ENCODE measurements at regions of chr5 and their contacts with region 1.

Region 1: DNA sequence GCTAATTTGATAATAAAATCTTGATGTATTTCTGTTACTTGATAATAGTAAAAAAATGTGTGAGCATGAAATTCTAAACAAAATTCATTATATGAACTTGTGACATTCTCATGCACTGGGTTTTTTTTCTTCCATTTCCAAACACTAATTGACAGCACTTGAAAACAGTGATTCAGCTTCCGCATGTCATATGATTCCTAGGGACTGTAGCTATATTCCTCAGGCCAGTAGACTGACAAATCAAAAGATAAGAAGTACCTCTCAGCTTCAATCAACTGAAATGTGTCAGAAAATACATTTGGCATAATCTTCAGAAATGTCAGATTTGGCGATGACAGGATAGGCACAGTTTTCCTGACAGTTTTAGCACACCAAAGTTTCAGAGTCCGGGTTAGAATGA is 52.5 kb downstream of the EFNA5 start:
- DNase-seq: peak; percentile 46
- H3K4me3 Mint-ChIP-seq: no peak overlapping the region
- H3K27ac Mint-ChIP-seq: no peak overlapping the region
- H3K4me1 Mint-ChIP-seq: peaks cover 55% of the 10 kb centered on the region
- H3K27me3 Mint-ChIP-seq: no peaks in the 10 kb centered on the region
- CTCF ChIP-seq: no peak

Region 2: GRCh38 chr5:107604832-107605389 is 13.3 kb before region 1 on chr5:
- CTCF ChIA-PET with region 1: no interaction called
- POLR2A ChIA-PET with region 1: interaction called, 42 read pairs
- intact Hi-C with region 1: no loop called
- DNase-seq: no peak
- H3K4me3 Mint-ChIP-seq: no peak overlapping the region
- H3K27ac Mint-ChIP-seq: no peak overlapping the region
- H3K4me1 Mint-ChIP-seq: peaks cover 41% of the 10 kb centered on the region
- H3K27me3 Mint-ChIP-seq: no peaks in the 10 kb centered on the region
- CTCF ChIP-seq: no peak

Region 3: DNA sequence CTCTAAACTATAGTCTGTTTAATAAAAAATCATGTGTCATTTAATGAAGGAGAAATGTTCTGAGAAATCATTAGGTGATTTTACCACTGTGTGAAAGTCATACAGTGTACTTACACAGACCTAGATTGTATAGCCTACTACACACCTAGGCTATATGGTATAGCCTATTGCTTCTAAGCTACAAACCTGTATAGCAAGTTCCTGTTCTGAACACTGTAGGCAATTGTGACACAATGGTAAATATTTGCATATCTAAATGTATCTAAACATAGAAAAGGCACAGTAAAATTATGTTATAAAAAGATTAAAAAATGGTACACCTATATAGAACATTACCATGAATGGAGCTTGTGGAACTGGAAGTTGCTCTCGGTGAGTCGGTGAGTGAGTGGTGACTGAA is 12.0 kb after region 1 on chr5:
- CTCF ChIA-PET with region 1: interaction called, 6 read pairs
- POLR2A ChIA-PET with region 1: interaction called, 35 read pairs
- intact Hi-C with region 1: no loop called
- DNase-seq: no peak
- H3K4me3 Mint-ChIP-seq: no peak overlapping the region
- H3K27ac Mint-ChIP-seq: no peak overlapping the region
- H3K4me1 Mint-ChIP-seq: peaks cover 23% of the 10 kb centered on the region
- H3K27me3 Mint-ChIP-seq: no peaks in the 10 kb centered on the region
- CTCF ChIP-seq: no peak

Region 4: DNA sequence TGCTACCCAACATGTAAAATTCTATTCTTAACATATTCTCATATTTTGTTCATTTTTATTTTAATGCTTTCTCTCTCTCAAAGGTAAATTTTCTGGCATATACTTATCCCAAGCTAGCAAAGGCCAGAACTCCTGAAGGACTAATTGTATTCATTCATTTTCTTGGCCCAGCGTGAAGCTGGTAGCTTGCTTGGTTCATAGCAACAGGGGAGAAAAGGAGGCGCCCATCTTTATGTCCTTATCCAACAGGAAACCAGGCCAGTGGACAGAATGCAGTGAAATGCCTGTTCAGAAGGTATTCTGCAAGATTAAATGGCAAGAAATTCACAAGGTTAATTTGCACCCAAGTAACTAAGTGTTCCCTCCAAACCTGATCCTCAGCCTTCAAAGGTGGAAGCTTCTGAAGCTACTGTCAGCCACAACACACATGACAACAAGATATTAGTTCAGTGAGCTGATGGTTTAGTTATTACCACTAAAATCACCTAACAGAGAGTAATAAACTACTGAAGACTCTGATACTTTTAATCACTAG is 46.9 kb after region 1 on chr5:
- CTCF ChIA-PET with region 1: interaction called, 3 read pairs
- POLR2A ChIA-PET with region 1: interaction called, 5 read pairs
- intact Hi-C with region 1: loop called (anchors 2 kb)
- DNase-seq: no peak
- H3K4me3 Mint-ChIP-seq: peak overlapping the region; percentile 21
- H3K27ac Mint-ChIP-seq: peak overlapping the region; percentile 26
- H3K4me1 Mint-ChIP-seq: peaks cover 26% of the 10 kb centered on the region
- H3K27me3 Mint-ChIP-seq: no peaks in the 10 kb centered on the region
- CTCF ChIP-seq: no peak

Measured in MCF 10A (cell line).